WTC11 (cell line): ENCODE measurements at regions of chr1 and their contacts with region 1.

Region 1: DNA sequence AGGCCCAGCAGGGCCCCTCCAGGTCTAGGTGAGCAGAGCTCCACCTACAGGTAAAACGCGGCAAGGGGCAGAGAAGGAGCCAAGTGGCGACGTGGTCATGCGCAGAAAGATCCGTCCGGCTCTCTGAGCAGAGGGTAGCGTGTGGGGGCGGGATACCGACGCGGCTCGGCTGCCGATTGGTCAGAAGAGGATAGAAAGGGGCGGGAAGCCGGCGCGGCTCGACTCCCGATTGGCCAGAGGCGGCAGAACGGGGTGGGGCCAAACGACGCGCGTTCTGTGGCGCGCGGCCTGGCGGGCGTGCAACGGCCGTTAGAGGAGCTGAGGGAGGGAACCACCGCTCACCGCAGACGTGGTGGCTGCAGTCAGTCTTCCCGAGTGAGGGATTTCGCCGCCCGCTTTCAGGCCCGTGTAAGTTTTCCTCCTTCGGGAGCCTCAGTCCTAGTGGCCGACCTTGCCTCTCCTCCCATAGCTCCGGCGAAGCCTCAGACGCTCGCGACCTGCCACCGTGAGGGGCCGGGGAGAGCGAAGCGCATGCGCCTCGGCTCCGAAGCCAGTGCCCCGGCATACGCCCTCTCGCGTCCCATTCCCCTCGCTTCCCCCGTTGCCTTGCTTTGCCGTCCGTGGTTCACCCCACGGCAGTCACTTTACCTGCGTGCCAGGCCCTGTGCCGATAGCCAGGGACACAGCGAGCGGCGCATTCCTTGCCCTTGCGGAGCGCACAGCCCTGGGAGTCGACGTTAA is at the start of gene CEP85:
- DNase-seq: peak; percentile 99
- ATAC-seq: peak; percentile 96
- H3K4me3 Mint-ChIP-seq: peak within 1 kb of the TSS; percentile 99
- H3K27ac Mint-ChIP-seq: peak within 1 kb of the TSS; percentile 87
- H3K4me1 Mint-ChIP-seq: peaks cover 25% of the 10 kb centered on the region
- H3K27me3 Mint-ChIP-seq: peaks cover 4% of the 10 kb centered on the region
- CTCF ChIP-seq: peak; percentile 49; the same call in 1 of the 2 replicates
- total RNA-seq, gene CEP85: 32.0 to 40.8 TPM (median 35.3 TPM) in 3 replicates

Region 2: DNA sequence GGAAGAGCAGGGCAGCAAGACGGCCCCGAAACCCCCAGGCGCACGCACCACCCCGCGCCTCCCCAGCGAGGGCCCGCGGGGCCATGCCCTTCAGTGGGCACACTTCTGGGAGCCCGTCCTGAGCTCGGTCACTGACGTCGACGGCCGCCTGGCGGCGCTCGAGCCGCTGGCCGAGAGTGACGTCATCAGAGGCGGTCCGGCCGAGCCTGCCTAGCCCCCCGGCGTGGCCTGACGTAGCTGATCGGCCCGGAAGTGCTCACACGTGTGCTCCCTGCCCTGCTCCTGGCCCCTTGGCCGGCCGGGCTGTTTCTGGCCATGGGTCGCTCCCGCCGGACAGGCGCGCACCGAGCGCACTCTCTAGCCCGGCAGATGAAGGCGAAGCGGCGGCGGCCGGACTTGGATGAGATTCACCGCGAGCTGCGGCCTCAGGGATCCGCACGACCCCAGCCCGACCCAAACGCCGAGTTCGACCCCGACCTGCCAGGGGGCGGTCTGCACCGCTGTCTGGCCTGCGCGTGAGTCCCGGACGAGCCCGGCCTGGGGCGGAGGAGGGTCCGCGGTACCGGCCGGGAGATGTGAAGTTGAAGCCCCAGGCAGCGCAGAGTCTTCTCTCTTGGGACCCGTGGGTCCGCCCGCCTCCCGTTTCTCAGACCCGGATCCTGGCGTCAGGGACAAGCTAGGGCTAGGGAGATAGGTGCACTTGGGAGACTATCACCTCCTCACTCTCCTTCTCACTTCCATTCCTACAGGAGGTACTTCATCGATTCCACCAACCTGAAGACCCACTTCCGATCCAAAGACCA is 64.2 kb before region 1 on chr1 and contains the start of gene ZNF593:
- CTCF ChIA-PET with region 1: interaction called, 61 read pairs
- POLR2A ChIA-PET with region 1: interaction called, 9 read pairs
- DNase-seq: peak; percentile 92
- ATAC-seq: peak; percentile 76
- H3K4me3 Mint-ChIP-seq: peak within 1 kb of the TSS; percentile 85
- H3K27ac Mint-ChIP-seq: peak within 1 kb of the TSS; percentile 65; the same call in 1 of the 2 replicates
- H3K4me1 Mint-ChIP-seq: peaks cover 31% of the 10 kb centered on the region
- H3K27me3 Mint-ChIP-seq: peaks cover 14% of the 10 kb centered on the region
- CTCF ChIP-seq: peak; percentile 81
- total RNA-seq, gene ZNF593: 39.6 to 49.1 TPM (median 43.3 TPM) in 3 replicates

Region 3: GRCh38 chr1:26203642-26204318 is 30.3 kb before region 1 on chr1:
- CTCF ChIA-PET with region 1: interaction called, 26 read pairs
- POLR2A ChIA-PET with region 1: interaction called, 4 read pairs
- DNase-seq: no peak
- ATAC-seq: peak; percentile 21
- H3K4me3 Mint-ChIP-seq: no peak overlapping the region
- H3K27ac Mint-ChIP-seq: no peak overlapping the region
- H3K4me1 Mint-ChIP-seq: peaks cover 18% of the 10 kb centered on the region
- H3K27me3 Mint-ChIP-seq: no peaks in the 10 kb centered on the region; the same call in none of the 2 replicates
- CTCF ChIP-seq: no peak

Region 4: DNA sequence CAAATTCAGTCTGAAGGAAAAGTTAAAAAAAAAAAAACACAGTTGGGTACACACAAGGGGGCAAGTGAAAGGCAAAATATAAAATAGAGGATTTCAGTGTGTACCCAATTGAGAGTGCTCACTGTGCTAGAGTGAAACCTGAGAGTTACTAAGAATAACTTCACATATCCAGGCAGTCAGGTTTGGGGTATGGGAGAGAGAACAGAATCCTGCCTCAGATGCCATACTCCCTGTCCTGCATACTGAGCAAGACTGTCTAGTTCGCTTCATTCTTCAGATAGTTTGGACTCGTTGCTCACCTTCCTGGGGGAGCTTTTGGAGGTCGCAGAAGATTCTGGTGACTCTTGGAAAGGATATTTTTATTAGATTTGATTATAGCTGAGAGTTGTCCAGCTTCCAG is 20.3 kb after region 1 on chr1:
- CTCF ChIA-PET with region 1: interaction called, 10 read pairs
- POLR2A ChIA-PET with region 1: no interaction called
- DNase-seq: no peak
- ATAC-seq: no peak
- H3K4me3 Mint-ChIP-seq: no peak overlapping the region
- H3K27ac Mint-ChIP-seq: no peak overlapping the region
- H3K4me1 Mint-ChIP-seq: no peaks in the 10 kb centered on the region
- H3K27me3 Mint-ChIP-seq: no peaks in the 10 kb centered on the region
- CTCF ChIP-seq: no peak